ENCODE measurements at regions of chr21 and their contacts with region 1.

Region 1: DNA sequence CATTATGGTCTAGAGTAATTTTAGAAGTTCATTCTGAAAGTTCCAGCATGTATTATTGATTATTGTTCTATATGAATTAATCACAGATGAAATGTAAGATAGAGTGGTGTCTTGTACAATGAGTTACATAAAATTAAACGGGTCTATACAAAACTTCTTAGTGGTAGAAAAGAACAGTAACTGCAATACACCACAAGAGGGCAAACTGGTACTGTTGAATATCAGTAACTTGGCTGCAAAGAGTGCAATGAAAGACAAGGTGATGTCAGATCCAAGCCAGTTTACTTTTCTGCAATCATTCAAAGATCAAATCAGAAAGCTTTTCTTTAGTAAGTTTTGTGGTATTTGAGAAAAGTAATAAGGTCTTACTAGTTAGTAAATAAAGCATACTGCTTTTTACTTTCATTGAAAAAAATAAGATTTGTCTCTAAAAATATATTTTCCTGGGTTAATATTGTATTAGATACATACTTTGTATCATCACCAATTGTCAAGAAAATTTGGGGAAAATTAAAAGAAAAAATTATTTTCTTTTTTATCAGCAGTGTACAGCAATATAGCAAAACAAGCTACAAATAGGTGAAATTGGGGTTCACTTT is 66.4 kb upstream of the BTG3 start:
- DNase-seq: peak; percentile 57
- ATAC-seq: peak; percentile 88
- H3K4me3 ChIP-seq: no peak overlapping the region
- H3K27ac ChIP-seq: no peak overlapping the region
- H3K4me1 ChIP-seq: no peaks in the 10 kb centered on the region
- H3K27me3 ChIP-seq: peaks cover 0 to 6% of the 10 kb centered on the region in 2 experiments; a peak in 3 of 5 replicates
- CTCF ChIP-seq: peak; percentile 80
- EP300 ChIP-seq: no peak
- POLR2A ChIP-seq: no peak
- RAD21 ChIP-seq: peak; percentile 70

Region 2: DNA sequence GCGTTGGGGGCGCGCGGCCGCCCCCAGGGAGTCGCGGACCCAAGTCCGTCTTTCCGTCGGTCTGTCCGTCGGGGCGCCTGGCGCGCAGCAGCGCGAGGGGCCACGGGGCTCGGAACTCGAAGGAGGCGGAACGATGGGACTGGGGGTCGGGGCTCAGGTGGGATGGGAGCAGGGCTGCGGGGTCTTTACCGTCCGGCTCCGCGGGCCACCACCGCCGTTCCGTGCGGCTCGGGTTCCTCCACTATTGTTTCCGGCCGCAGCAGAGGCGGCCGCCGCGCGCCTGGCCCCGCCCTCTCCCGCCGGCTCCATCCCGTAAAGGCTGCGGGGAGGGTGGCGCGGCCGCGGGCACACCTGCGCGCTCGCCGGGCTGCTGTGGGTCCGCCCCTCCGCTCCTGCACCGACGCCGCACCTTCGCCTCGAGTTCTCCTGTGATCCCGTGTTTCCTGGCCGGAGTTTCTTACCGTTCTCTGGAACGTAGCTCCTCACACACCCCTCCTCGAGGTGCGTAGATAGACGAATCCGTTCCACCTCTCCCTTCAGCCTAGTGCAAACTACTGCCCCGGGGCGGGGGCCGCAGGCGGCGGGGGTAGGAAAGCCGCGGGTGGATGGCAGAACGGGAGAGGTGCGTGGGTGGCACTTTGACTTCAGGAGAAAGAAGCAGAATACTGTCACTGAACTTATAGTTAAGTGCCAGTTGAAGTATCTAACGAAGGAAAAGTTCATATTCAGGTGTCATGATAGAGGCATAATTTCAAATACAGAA is 140.2 kb after region 1 on chr21 and contains the start of gene C21orf91:
- CTCF ChIA-PET with region 1: no interaction called
- POLR2A ChIA-PET with region 1: no interaction called
- in situ Hi-C with region 1: no loop called
- intact Hi-C with region 1: loop called (anchors 10 kb)
- DNase-seq: peak; percentile 56
- ATAC-seq: peak; percentile 96
- H3K4me3 ChIP-seq: peak within 1 kb of the TSS; percentile 89 to 96 (median 93)
- H3K27ac ChIP-seq: peak within 1 kb of the TSS; percentile 90
- H3K4me1 ChIP-seq: peaks cover 22% of the 10 kb centered on the region
- H3K27me3 ChIP-seq: no peaks in the 10 kb centered on the region; a peak in 1 of 5 replicates
- CTCF ChIP-seq: no peak
- EP300 ChIP-seq: no peak
- POLR2A ChIP-seq: peak; percentile 84 to 92
- RAD21 ChIP-seq: no peak
- total RNA-seq, gene C21orf91: 7.8 and 13.0 TPM in 2 replicates

Region 3: DNA sequence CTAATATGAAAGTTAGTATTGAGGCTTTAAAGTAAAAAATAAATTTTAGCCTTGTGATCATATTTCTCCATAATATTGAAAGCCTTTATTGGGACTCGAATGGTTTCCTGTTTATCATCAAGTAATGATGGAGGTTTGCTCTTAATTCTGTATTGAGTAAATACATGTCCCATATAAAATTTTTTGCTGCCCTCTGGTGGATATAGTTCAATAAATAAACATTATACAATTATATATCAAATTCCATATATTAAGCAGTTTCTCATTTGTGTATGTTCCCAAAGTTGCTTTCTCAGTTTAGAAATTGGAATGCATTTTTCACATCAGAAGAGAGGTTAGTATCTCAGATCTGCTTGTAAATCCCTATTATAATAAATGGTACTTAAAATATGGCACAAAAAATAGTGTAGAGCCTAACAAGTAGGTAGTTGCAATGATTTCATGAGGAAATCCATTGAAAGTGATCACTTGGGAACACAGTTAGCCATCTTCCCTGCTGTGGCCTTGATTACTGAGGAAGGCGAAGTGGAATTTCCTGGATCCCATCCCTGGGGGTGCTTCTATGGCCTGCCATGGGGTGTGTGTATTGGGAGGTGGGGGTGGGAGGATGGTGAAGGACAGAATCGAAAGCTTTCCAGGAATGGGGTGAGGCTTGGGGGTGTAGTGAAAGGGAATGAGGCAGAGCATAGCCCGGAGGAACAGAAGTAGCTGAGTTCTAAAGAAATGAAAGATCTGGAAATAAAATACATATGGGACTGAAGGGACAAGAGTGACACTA is 224.1 kb after region 1 on chr21:
- CTCF ChIA-PET with region 1: interaction called, 6 read pairs
- POLR2A ChIA-PET with region 1: no interaction called
- in situ Hi-C with region 1: no loop called
- intact Hi-C with region 1: loop called (anchors 1 kb)
- DNase-seq: no peak
- ATAC-seq: no peak
- H3K4me3 ChIP-seq: no peak overlapping the region
- H3K27ac ChIP-seq: no peak overlapping the region
- H3K4me1 ChIP-seq: no peaks in the 10 kb centered on the region
- H3K27me3 ChIP-seq: no peaks in the 10 kb centered on the region
- CTCF ChIP-seq: no peak
- EP300 ChIP-seq: no peak
- POLR2A ChIP-seq: no peak
- RAD21 ChIP-seq: no peak

Region 4: GRCh38 chr21:17925000-17925610 is 246.0 kb after region 1 on chr21:
- CTCF ChIA-PET with region 1: interaction called, 30 read pairs
- POLR2A ChIA-PET with region 1: no interaction called
- in situ Hi-C with region 1: loop called (anchors 5 kb)
- intact Hi-C with region 1: loop called (anchors 1 kb)
- DNase-seq: peak; percentile 63
- ATAC-seq: peak; percentile 100
- H3K4me3 ChIP-seq: no peak overlapping the region
- H3K27ac ChIP-seq: no peak overlapping the region
- H3K4me1 ChIP-seq: no peaks in the 10 kb centered on the region
- H3K27me3 ChIP-seq: no peaks in the 10 kb centered on the region
- CTCF ChIP-seq: peak; percentile 80
- EP300 ChIP-seq: no peak
- POLR2A ChIP-seq: no peak
- RAD21 ChIP-seq: no peak

Region 5: DNA sequence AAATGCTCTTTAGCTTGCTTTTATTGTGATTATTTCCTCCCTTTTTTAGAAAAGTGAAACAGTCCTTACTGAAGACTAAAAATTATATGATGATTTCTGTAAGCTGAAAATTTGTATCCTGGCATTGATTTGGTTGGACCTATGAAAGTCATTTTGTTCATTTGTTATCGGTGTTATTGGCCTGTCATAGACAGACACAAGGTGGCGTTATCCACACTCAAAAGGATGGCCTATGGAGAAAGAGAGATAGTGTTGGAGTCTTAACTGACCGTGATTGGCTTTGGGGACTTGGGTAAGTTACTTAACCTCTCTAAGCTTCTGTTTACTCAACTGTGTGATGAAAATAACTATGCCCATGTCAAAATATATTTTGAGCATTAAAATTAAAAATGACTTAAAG is 361.9 kb after region 1 on chr21:
- CTCF ChIA-PET with region 1: no interaction called
- POLR2A ChIA-PET with region 1: no interaction called
- in situ Hi-C with region 1: no loop called
- intact Hi-C with region 1: loop called (anchors 5 kb)
- DNase-seq: peak; percentile 45
- ATAC-seq: peak; percentile 85
- H3K4me3 ChIP-seq: no peak overlapping the region
- H3K27ac ChIP-seq: no peak overlapping the region
- H3K4me1 ChIP-seq: no peaks in the 10 kb centered on the region
- H3K27me3 ChIP-seq: no peaks in the 10 kb centered on the region
- CTCF ChIP-seq: peak; percentile 62
- EP300 ChIP-seq: no peak
- POLR2A ChIP-seq: no peak
- RAD21 ChIP-seq: no peak

Region 6: GRCh38 chr21:18369115-18369514 is 690.0 kb after region 1 on chr21:
- CTCF ChIA-PET with region 1: no interaction called
- POLR2A ChIA-PET with region 1: no interaction called
- in situ Hi-C with region 1: no loop called
- intact Hi-C with region 1: loop called (anchors 5 kb)
- DNase-seq: peak; percentile 2
- ATAC-seq: no peak
- H3K4me3 ChIP-seq: no peak overlapping the region
- H3K27ac ChIP-seq: no peak overlapping the region
- H3K4me1 ChIP-seq: no peaks in the 10 kb centered on the region
- H3K27me3 ChIP-seq: no peaks in the 10 kb centered on the region
- CTCF ChIP-seq: no peak
- EP300 ChIP-seq: no peak
- POLR2A ChIP-seq: no peak
- RAD21 ChIP-seq: no peak

Measured in HepG2 (cell line).